ENCODE measurements at regions of chr11 and their contacts with region 1.

Region 1: GRCh38 chr11:91023731-91024130 is 800.9 kb upstream of the CHORDC1 start:
- DNase-seq: no peak
- H3K4me3 ChIP-seq: no peak overlapping the region
- H3K4me3 Mint-ChIP-seq: no peak overlapping the region
- H3K27ac Mint-ChIP-seq: no peak overlapping the region
- H3K4me1 ChIP-seq: no peaks in the 10 kb centered on the region
- H3K4me1 Mint-ChIP-seq: no peaks in the 10 kb centered on the region
- H3K27me3 ChIP-seq: no peaks in the 10 kb centered on the region
- H3K27me3 Mint-ChIP-seq: peaks cover 9% of the 10 kb centered on the region
- CTCF ChIP-seq: no peak

Region 2: DNA sequence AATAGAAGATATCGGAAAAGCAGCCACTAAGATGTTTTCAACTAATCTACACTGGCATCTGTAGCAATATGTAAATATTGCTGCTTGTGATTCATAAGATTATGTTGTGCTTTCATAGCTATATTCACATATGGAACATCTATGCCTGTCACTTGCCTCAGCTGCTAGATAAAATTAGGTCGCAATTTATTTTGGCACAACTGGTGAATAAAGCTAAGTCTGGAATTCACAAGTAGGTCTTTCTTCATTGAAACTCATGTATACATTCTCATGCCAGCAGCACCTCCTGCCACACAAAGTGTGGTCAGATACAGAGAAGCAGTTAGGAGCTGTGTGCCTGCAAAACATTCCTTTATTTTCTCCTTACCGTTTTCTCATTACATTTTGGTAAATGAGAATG is 257.6 kb before region 1 on chr11:
- CTCF ChIA-PET with region 1: no interaction called
- POLR2A ChIA-PET with region 1: no interaction called
- intact Hi-C with region 1: loop called (anchors 10 kb)
- DNase-seq: no peak
- H3K4me3 ChIP-seq: no peak overlapping the region
- H3K4me3 Mint-ChIP-seq: no peak overlapping the region
- H3K27ac Mint-ChIP-seq: no peak overlapping the region
- H3K4me1 ChIP-seq: no peaks in the 10 kb centered on the region
- H3K4me1 Mint-ChIP-seq: no peaks in the 10 kb centered on the region
- H3K27me3 ChIP-seq: no peaks in the 10 kb centered on the region
- H3K27me3 Mint-ChIP-seq: peaks cover 3% of the 10 kb centered on the region
- CTCF ChIP-seq: no peak

Region 3: GRCh38 chr11:91005458-91005857 is 18.3 kb before region 1 on chr11:
- CTCF ChIA-PET with region 1: no interaction called
- POLR2A ChIA-PET with region 1: no interaction called
- intact Hi-C with region 1: no loop called
- DNase-seq: no peak
- H3K4me3 ChIP-seq: no peak overlapping the region
- H3K4me3 Mint-ChIP-seq: no peak overlapping the region
- H3K27ac Mint-ChIP-seq: no peak overlapping the region
- H3K4me1 ChIP-seq: no peaks in the 10 kb centered on the region
- H3K4me1 Mint-ChIP-seq: no peaks in the 10 kb centered on the region
- H3K27me3 ChIP-seq: no peaks in the 10 kb centered on the region
- H3K27me3 Mint-ChIP-seq: no peaks in the 10 kb centered on the region
- CTCF ChIP-seq: no peak

Region 4: GRCh38 chr11:91041626-91042025 is 17.9 kb after region 1 on chr11:
- CTCF ChIA-PET with region 1: no interaction called
- POLR2A ChIA-PET with region 1: no interaction called
- intact Hi-C with region 1: no loop called
- DNase-seq: no peak
- H3K4me3 ChIP-seq: no peak overlapping the region
- H3K4me3 Mint-ChIP-seq: no peak overlapping the region
- H3K27ac Mint-ChIP-seq: no peak overlapping the region
- H3K4me1 ChIP-seq: no peaks in the 10 kb centered on the region
- H3K4me1 Mint-ChIP-seq: no peaks in the 10 kb centered on the region
- H3K27me3 ChIP-seq: no peaks in the 10 kb centered on the region
- H3K27me3 Mint-ChIP-seq: no peaks in the 10 kb centered on the region
- CTCF ChIP-seq: peak in 1 of 2 experiments; percentile 24

Measured in Caco-2 (cell line).